HAP-1 (cell line): ENCODE measurements at regions of chr15 and their contacts with region 1.

Region 1: GRCh38 chr15:96330450-96331145 is at the start of gene NR2F2:
- DNase-seq: peak; percentile 94 to 95
- H3K4me3 ChIP-seq: peak within 1 kb of the TSS; percentile 68
- H3K4me1 ChIP-seq: peaks cover 32% of the 10 kb centered on the region
- H3K27me3 ChIP-seq: no peaks in the 10 kb centered on the region

Region 2: DNA sequence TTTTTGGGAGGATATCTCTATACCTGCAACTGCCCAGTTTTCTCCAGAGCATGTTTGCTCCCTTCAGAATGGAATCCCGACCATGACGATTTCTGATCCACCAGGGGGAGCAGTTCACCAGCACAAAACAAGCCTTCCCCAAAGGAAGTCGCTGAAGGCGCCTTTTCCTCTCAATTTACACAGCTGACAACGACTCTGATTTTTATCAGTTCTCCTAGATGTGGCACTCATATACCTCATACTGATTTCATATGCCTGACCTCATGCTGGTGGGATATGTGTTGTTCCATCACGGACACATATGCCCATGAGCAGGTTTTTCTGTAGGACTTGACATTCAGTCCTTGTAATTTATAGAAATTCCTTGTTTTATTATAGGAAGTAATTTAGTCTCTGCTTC is 1071.1 kb before region 1 on chr15:
- in situ Hi-C with region 1: loop called (anchors 25 kb)
- DNase-seq: peak; percentile 68 to 73
- H3K4me3 ChIP-seq: no peak overlapping the region
- H3K4me1 ChIP-seq: no peaks in the 10 kb centered on the region
- H3K27me3 ChIP-seq: 0 out of 2 replicates have a peak, but pooled peaks cover 3% of the 10 kb centered on the region

Region 3: GRCh38 chr15:95826412-95827195 is 504.0 kb before region 1 on chr15:
- in situ Hi-C with region 1: loop called (anchors 25 kb)
- DNase-seq: no peak
- H3K4me3 ChIP-seq: no peak overlapping the region
- H3K4me1 ChIP-seq: peaks cover 17% of the 10 kb centered on the region
- H3K27me3 ChIP-seq: no peaks in the 10 kb centered on the region

Region 4: DNA sequence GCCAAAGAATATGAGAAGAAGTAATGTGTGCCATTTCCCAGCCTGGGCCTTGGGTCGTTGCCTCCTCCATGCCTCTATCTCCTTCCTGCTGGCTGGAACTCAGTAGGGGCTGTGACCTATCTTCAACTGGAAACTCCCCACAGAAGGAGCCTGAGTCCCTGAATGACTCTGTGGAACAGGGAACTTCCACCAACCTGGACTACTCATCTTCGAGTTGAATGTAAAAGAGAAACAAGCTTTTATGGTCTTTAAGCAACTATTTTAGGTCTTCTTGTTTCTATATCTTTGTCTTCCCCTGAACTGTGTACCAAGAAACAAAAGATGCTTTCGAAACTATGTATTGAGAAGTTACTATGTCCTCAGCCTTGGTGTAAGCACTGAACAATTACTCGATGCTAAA is 355.4 kb before region 1 on chr15:
- in situ Hi-C with region 1: no loop called
- DNase-seq: peak in 1 of 2 experiments; percentile 6
- H3K4me3 ChIP-seq: no peak overlapping the region
- H3K4me1 ChIP-seq: no peaks in the 10 kb centered on the region
- H3K27me3 ChIP-seq: no peaks in the 10 kb centered on the region